ENCODE measurements at regions of chr18 and their contacts with region 1.

Region 1: GRCh38 chr18:45690975-45691815 is 32.8 kb upstream of the SLC14A1 start:
- DNase-seq: peak; percentile 2
- H3K4me3 ChIP-seq: no peak overlapping the region
- H3K27ac ChIP-seq: no peak overlapping the region
- H3K4me1 ChIP-seq: peaks cover 0 to 5% (median 0%) of the 10 kb centered on the region in 3 donors
- H3K27me3 ChIP-seq: peaks cover 0 to 54% (median 0%) of the 10 kb centered on the region in 4 donors
- CTCF ChIP-seq: peak; percentile 45 to 82 (median 76)
- POLR2A ChIP-seq: no peak

Region 2: DNA sequence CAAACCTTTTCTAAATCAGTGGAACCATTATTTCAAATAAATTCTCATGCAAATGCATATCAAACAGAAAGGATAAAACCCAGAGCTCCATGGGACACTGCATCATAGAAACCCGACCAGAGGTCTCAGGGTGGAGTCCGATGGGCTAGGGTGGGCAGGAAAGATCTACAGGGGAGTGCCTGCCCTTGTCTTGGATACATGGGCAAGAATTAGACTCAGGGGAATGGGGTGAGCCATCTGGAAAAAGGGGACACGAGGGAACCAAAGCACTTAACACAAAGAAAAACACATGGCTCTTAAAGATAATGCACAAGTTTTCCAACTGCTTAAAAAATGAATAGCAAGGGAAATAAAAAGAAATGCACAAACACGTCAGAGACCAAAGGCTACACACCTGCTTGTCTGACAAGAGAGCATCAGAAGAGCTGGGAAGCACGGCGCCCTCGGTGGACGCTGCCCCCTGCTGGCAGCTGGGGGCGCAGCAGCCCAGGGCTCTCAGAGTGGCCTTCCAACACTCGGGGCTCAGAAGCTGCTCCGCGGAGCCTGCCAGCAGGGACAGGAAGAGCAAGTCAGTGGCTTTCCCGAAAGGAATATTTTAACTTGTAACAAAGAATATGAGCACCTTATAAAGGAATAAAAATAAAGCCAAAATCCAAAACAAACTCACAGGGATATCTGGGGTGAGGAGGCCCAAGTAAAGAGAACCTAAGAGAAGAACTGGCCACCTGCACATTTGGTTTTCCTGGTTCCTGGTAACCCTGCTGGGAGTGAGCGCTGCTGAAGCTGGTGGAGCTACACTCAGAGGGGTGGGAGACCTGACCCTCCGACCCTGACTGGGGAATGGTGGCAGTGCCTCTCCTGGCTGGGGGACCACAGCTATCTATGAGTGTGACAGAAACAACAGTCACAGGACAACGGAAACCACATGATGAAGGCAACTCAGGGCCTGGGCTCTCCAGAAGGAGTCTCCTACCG is 188.8 kb after region 1 on chr18:
- intact Hi-C with region 1: loop called (anchors 10 kb)
- DNase-seq: no peak
- H3K4me3 ChIP-seq: no peak overlapping the region
- H3K27ac ChIP-seq: no peak overlapping the region
- H3K4me1 ChIP-seq: peaks cover 0 to 7% (median 0%) of the 10 kb centered on the region in 3 donors
- H3K27me3 ChIP-seq: no peaks in the 10 kb centered on the region
- CTCF ChIP-seq: peak; percentile 88 to 99 (median 96)
- POLR2A ChIP-seq: no peak

Region 3: DNA sequence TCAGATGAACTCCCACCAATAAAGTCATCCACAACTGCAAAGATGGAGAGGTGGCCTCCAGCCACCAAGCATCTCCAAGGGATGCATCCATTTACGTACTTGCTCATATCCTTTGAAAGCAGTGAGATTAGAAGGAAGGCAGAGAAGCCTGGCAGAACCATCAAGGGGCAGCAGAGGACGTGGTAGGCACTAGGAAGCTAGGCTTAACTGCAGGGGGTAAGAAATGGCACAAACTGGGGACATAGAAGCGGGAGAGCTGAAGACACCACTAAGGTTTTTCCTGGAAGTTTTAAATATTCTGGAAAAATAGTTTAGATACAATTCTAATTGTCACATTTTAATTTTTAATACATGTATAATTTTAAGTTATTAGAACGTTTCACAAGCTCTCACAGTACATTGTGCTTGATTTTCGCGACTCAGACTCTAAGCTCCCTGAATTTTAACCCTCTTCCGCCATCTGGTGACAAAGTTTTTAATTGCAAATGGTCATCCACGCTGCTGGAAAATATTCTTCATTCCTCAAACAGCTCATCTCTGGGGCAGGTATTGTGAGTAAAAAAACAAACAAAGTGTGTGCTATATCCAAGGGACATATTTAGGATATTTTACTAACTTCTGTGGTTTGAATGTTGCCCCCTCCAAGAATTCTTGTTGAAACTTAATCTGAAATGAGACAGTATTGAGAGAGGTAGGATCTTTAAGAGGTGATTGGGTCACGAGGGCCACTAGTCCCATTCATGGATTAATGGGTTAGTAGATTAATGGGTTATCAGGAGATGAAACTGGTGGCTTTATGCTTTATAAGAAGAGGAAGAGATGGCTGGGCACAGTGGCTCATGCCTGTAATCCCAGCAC is 382.5 kb after region 1 on chr18:
- intact Hi-C with region 1: loop called (anchors 10 kb)
- DNase-seq: no peak
- H3K4me3 ChIP-seq: no peak overlapping the region
- H3K27ac ChIP-seq: no peak overlapping the region
- H3K4me1 ChIP-seq: peaks cover 22 to 50% (median 24%) of the 10 kb centered on the region in 3 donors
- H3K27me3 ChIP-seq: no peaks in the 10 kb centered on the region
- CTCF ChIP-seq: peak; percentile 25 to 76 (median 64)
- POLR2A ChIP-seq: no peak

Measured in esophagus squamous epithelium (tissue), 5 donors.